ENCODE measurements at regions of chr7 and their contacts with region 1.

Region 1: GRCh38 chr7:80659120-80660055 is 20.9 kb downstream of the CD36 start:
- DNase-seq: peak in 4 of 9 donors; percentile 1 to 16 (median 14)
- ATAC-seq: peak; percentile 58
- H3K4me3 ChIP-seq: no peak overlapping the region
- H3K4me3 Mint-ChIP-seq: no peak overlapping the region
- H3K27ac ChIP-seq: no peak overlapping the region
- H3K27ac Mint-ChIP-seq: no peak overlapping the region
- H3K4me1 ChIP-seq: no peaks in the 10 kb centered on the region
- H3K4me1 Mint-ChIP-seq: no peaks in the 10 kb centered on the region
- H3K27me3 ChIP-seq: no peaks in the 10 kb centered on the region
- H3K27me3 Mint-ChIP-seq: peaks cover 0 to 6% (median 0%) of the 10 kb centered on the region in 5 donors

Region 2: GRCh38 chr7:79272066-79272669 is 1387.2 kb before region 1 on chr7:
- CTCF ChIA-PET with region 1: no interaction called
- POLR2A ChIA-PET with region 1: no interaction called
- intact Hi-C with region 1: loop called in 1 of 2 experiments (anchors 10 kb)
- DNase-seq: peak in 2 of 9 donors; percentile 15 to 22
- ATAC-seq: no peak
- H3K4me3 ChIP-seq: no peak overlapping the region
- H3K4me3 Mint-ChIP-seq: no peak overlapping the region
- H3K27ac ChIP-seq: no peak overlapping the region
- H3K27ac Mint-ChIP-seq: no peak overlapping the region
- H3K4me1 ChIP-seq: no peaks in the 10 kb centered on the region
- H3K4me1 Mint-ChIP-seq: no peaks in the 10 kb centered on the region
- H3K27me3 ChIP-seq: no peaks in the 10 kb centered on the region
- H3K27me3 Mint-ChIP-seq: no peaks in the 10 kb centered on the region

Region 3: DNA sequence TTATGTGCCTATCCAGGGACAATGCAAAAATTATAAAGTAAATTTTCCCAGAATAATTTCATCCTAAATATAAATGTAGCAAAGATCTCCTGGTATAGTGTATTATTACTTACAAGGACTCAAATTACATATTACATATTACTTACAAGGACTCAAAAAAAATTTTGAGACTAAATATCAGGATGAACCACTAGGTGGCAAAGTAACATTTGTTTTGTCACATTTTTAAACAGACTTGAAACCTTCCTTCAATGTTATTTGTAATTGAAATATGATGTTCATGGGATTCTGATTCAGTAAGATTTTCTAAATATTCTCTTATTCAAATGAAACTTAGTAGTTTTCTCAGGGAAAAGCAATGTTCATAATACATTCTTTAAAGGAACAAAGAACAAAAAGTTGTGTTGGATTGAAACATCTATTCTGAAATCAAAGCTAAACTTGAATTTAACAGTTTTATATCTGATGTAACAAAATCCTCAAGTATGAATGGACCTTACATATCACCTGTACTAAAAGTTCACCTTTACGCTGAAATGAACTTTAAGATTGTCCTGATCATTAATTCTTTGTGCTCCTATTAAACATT is 599.1 kb before region 1 on chr7:
- CTCF ChIA-PET with region 1: interaction called, 5 read pairs
- POLR2A ChIA-PET with region 1: no interaction called
- intact Hi-C with region 1: loop called (anchors 1 kb)
- DNase-seq: peak in 5 of 9 donors; percentile 13 to 40 (median 22)
- ATAC-seq: no peak
- H3K4me3 ChIP-seq: no peak overlapping the region
- H3K4me3 Mint-ChIP-seq: no peak overlapping the region
- H3K27ac ChIP-seq: no peak overlapping the region
- H3K27ac Mint-ChIP-seq: no peak overlapping the region
- H3K4me1 ChIP-seq: no peaks in the 10 kb centered on the region
- H3K4me1 Mint-ChIP-seq: no peaks in the 10 kb centered on the region
- H3K27me3 ChIP-seq: no peaks in the 10 kb centered on the region
- H3K27me3 Mint-ChIP-seq: no peaks in the 10 kb centered on the region

Region 4: DNA sequence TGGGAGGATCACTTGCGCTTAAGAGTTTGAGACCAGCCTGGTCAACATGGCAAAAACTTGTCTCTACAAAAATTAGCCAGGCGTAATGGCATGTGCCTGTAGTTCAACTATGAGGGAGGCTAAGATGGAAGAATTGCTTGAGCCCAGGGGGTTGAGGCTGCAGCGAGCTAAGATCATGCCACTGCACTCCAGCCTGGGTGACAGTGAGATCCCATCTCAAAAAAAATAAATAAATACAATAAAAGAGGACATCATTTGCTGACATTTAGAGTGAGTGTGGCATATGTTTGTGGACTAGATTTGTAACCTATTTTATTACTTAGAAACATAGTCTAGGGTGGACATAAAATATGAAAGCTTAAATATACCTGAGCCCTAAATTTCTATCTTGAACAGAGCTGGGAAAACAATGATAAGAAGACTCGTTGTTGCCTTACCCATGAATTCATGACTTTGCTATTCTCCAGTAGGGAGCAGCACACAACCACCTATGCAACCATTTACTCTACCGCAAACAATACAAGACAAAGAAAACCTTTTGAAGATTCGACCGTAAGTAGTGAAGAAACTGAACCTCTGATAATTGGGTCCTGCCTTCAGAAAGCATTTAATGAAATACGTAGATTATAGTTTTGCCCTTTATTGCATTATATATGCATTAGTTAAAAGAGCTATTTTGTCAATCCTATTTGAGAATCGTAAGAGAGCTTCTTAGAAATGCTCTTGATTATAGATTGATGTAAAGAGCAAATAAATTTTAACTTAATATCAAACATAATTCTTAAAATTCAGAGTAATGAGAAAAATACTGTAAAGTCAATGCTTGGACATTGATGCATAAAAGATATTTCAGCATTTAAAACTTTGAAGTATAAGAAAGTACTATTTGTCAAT is 231.0 kb before region 1 on chr7:
- CTCF ChIA-PET with region 1: no interaction called
- POLR2A ChIA-PET with region 1: no interaction called
- intact Hi-C with region 1: loop called (anchors 2 kb)
- DNase-seq: peak in 2 of 9 donors; percentile 1 to 9
- ATAC-seq: peak; percentile 60
- H3K4me3 ChIP-seq: no peak overlapping the region
- H3K4me3 Mint-ChIP-seq: no peak overlapping the region
- H3K27ac ChIP-seq: no peak overlapping the region
- H3K27ac Mint-ChIP-seq: no peak overlapping the region
- H3K4me1 ChIP-seq: no peaks in the 10 kb centered on the region
- H3K4me1 Mint-ChIP-seq: no peaks in the 10 kb centered on the region
- H3K27me3 ChIP-seq: no peaks in the 10 kb centered on the region
- H3K27me3 Mint-ChIP-seq: no peaks in the 10 kb centered on the region

Region 5: DNA sequence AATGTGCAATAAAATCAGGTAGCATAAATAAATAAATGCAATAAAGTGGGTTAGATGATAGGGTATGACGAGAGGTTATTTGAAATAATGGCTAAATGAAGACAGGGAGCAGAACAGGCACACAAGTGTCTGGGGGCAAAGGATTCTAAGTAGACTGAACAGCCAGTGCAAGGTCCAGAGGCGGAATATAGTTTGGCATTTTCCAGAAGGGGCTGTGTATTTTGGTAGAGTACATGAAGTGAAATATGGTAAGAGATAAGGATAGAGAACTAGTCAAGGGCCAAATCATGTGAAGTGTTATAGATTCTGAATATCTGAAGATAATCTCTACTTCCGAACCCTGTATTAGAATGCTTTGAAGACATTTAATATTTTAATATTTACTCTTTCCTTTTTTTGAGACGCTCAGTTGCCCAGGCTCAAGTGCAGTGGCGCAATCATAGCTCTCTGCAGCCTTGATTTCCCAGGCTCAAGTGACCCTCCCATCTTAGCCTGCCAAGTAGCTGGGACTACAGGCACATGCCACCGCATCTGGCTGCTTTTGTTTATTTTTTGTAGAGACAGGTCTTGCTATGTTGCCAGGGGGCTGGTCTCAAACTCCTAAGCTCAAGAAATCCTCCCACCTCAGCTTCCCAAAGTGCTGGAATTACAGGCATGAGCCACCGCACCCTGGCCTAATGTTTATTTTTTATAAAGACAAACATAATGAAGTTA is 65.4 kb before region 1 on chr7:
- CTCF ChIA-PET with region 1: no interaction called
- POLR2A ChIA-PET with region 1: no interaction called
- intact Hi-C with region 1: no loop called
- DNase-seq: no peak
- ATAC-seq: no peak
- H3K4me3 ChIP-seq: no peak overlapping the region
- H3K4me3 Mint-ChIP-seq: no peak overlapping the region
- H3K27ac ChIP-seq: no peak overlapping the region
- H3K27ac Mint-ChIP-seq: no peak overlapping the region
- H3K4me1 ChIP-seq: no peaks in the 10 kb centered on the region
- H3K4me1 Mint-ChIP-seq: no peaks in the 10 kb centered on the region
- H3K27me3 ChIP-seq: no peaks in the 10 kb centered on the region
- H3K27me3 Mint-ChIP-seq: peaks cover 0 to 6% (median 0%) of the 10 kb centered on the region in 5 donors

Region 6: GRCh38 chr7:80643336-80643915 is 16.0 kb before region 1 on chr7:
- CTCF ChIA-PET with region 1: no interaction called
- POLR2A ChIA-PET with region 1: no interaction called
- intact Hi-C with region 1: no loop called
- DNase-seq: no peak
- ATAC-seq: peak; percentile 70
- H3K4me3 ChIP-seq: no peak overlapping the region
- H3K4me3 Mint-ChIP-seq: no peak overlapping the region
- H3K27ac ChIP-seq: no peak overlapping the region
- H3K27ac Mint-ChIP-seq: no peak overlapping the region
- H3K4me1 ChIP-seq: no peaks in the 10 kb centered on the region
- H3K4me1 Mint-ChIP-seq: peaks cover 0 to 2% (median 0%) of the 10 kb centered on the region in 7 donors
- H3K27me3 ChIP-seq: no peaks in the 10 kb centered on the region
- H3K27me3 Mint-ChIP-seq: no peaks in the 10 kb centered on the region

Region 7: GRCh38 chr7:82410461-82410860 is 1751.1 kb after region 1 on chr7:
- CTCF ChIA-PET with region 1: no interaction called
- POLR2A ChIA-PET with region 1: no interaction called
- intact Hi-C with region 1: no loop called
- DNase-seq: no peak
- ATAC-seq: no peak
- H3K4me3 ChIP-seq: no peak overlapping the region
- H3K4me3 Mint-ChIP-seq: no peak overlapping the region
- H3K27ac ChIP-seq: no peak overlapping the region
- H3K27ac Mint-ChIP-seq: no peak overlapping the region
- H3K4me1 ChIP-seq: no peaks in the 10 kb centered on the region
- H3K4me1 Mint-ChIP-seq: no peaks in the 10 kb centered on the region
- H3K27me3 ChIP-seq: no peaks in the 10 kb centered on the region
- H3K27me3 Mint-ChIP-seq: no peaks in the 10 kb centered on the region

Measured in naive thymus-derived CD4-positive, alpha-beta T cell (primary cell).